HepG2 (cell line): ENCODE measurements at regions of chr9 and their contacts with region 1.

Region 1: GRCh38 chr9:100352727-100353505 is at the start of gene TEX10:
- DNase-seq: peak; percentile 75
- ATAC-seq: peak; percentile 91
- H3K4me3 ChIP-seq: peak within 1 kb of the TSS; percentile 86 to 94 (median 88)
- H3K27ac ChIP-seq: peak within 1 kb of the TSS; percentile 85
- H3K4me1 ChIP-seq: peaks cover 57% of the 10 kb centered on the region
- H3K27me3 ChIP-seq: no peaks in the 10 kb centered on the region; a peak in 1 of 5 replicates
- CTCF ChIP-seq: 0 out of 2 replicates have a peak, but pooled peaks have one; percentile 25
- EP300 ChIP-seq: no peak
- POLR2A ChIP-seq: peak; percentile 80 to 94
- RAD21 ChIP-seq: no peak
- total RNA-seq, gene TEX10: 38.7 and 50.2 TPM in 2 replicates

Region 2: DNA sequence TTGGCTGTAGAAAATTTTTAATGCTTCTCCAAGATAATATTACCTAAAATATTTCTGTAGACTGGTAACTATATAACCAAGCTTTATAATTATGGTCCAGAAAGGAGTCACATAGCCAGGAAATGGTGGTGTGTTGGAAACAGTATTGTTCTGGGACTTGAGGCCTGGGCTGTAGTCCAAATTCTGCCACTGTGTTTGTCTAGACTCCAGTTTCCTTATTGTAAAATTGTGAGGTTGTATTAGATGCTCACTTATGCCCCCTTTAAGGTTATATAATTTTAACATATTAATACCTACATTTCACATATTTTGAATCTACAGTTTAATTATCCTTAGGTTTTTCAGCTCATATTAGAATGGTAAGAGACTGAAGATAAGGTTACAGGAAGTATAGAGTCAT is 404.0 kb before region 1 on chr9:
- CTCF ChIA-PET with region 1: no interaction called
- POLR2A ChIA-PET with region 1: no interaction called
- in situ Hi-C with region 1: no loop called
- intact Hi-C with region 1: no loop called
- DNase-seq: no peak
- ATAC-seq: no peak
- H3K4me3 ChIP-seq: no peak overlapping the region
- H3K27ac ChIP-seq: no peak overlapping the region
- H3K4me1 ChIP-seq: no peaks in the 10 kb centered on the region
- H3K27me3 ChIP-seq: no peaks in the 10 kb centered on the region
- CTCF ChIP-seq: no peak
- EP300 ChIP-seq: no peak
- POLR2A ChIP-seq: no peak
- RAD21 ChIP-seq: no peak

Region 3: DNA sequence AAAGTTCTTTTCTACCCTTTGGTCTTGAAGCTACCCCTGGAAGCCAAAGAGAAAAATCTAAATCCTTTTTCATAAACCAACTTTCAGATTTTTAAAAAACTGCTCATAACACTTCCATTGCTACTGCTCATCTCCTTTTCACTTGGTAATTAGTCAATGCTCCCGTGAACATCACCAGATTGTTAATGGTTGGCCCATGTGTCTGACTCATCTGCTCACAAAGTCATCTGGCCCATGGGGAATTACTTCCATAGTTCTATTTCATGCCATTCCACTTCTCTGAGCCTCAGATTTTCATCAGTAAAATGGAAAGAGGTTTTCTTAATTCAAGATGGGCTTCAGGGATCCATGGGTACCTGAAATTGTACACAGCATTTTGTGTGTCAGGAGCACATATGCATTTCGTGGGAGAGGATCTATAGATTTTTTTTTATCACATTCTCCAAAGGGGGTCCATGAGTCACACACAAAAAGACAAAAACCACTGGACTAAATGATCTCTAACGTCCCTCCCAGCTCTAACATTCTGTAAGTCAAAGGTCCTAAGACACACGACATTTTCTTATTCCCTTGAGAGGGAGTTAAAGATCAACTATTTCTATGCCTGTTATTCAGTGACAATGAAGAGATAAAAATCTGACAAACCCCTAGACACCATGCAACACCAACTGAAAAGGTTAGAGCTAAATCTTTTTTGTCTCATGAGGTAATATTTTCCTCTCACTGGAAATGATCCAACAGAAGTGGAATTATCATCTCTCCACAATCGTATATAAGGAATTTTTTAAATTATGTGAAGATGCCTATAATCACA is 75.5 kb before region 1 on chr9:
- CTCF ChIA-PET with region 1: no interaction called
- POLR2A ChIA-PET with region 1: no interaction called
- in situ Hi-C with region 1: no loop called
- intact Hi-C with region 1: no loop called
- DNase-seq: no peak
- ATAC-seq: no peak
- H3K4me3 ChIP-seq: no peak overlapping the region
- H3K27ac ChIP-seq: no peak overlapping the region
- H3K4me1 ChIP-seq: no peaks in the 10 kb centered on the region
- H3K27me3 ChIP-seq: no peaks in the 10 kb centered on the region
- CTCF ChIP-seq: no peak
- EP300 ChIP-seq: no peak
- POLR2A ChIP-seq: no peak
- RAD21 ChIP-seq: no peak

Region 4: DNA sequence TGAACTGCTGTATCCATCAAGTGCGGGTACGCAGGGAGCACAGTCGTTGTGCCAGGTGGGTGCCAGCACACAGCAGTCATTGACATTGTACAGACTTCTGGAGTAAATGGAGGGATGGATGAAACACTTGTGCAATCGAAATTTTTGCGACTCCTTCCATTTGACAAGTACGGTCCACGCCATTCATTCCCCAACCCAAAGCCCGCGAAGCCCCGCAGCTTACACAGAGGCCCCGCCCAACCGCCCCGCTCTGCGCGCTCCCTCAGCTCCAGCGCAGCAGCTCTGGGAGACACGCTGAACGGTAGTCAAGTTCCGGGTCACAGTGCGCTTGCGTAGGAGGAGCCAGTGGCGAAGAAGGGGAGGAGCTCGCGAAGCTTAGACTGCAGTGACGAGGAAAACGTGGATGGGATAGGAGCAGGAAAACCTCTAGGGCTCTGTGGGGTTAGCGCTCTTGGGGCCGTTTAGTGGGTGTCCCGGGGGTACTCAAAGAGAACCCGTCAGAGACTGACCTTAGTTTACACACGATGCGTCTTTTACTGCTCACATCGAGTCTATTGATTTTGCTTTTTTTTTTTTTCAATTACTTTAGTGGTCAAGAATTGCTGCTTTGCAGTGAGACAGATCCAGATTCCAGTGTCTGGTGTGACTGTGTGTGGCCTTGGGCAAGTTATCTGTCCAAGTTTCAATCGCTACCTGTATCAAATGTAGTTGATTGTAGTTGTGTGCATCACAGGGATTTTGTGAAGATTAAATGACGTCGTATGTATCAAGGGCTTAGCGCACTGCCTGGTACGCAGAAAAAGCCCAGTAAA is 58.8 kb after region 1 on chr9:
- CTCF ChIA-PET with region 1: no interaction called
- POLR2A ChIA-PET with region 1: interaction called, 12 read pairs
- in situ Hi-C with region 1: no loop called
- intact Hi-C with region 1: loop called (anchors 5 kb)
- DNase-seq: peak; percentile 89
- ATAC-seq: peak; percentile 99
- H3K4me3 ChIP-seq: peak overlapping the region; percentile 43 to 70 (median 48)
- H3K27ac ChIP-seq: peak overlapping the region; percentile 41
- H3K4me1 ChIP-seq: peaks cover 14% of the 10 kb centered on the region
- H3K27me3 ChIP-seq: no peaks in the 10 kb centered on the region; a peak in 1 of 5 replicates
- CTCF ChIP-seq: no peak
- EP300 ChIP-seq: no peak
- POLR2A ChIP-seq: peak; percentile 56 to 82
- RAD21 ChIP-seq: no peak